AG04449 (cell line): ENCODE measurements at regions of chr7 and their contacts with region 1.

Region 1: GRCh38 chr7:120987683-120988590 is 574 bp upstream of the CPED1 start:
- DNase-seq: peak; percentile 77
- H3K4me3 ChIP-seq: peak overlapping the region; percentile 63
- CTCF ChIP-seq: peak; percentile 88

Region 2: GRCh38 chr7:120680985-120681384 is 307.0 kb before region 1 on chr7:
- CTCF ChIA-PET with region 1: no interaction called
- POLR2A ChIA-PET with region 1: no interaction called
- DNase-seq: no peak
- H3K4me3 ChIP-seq: no peak overlapping the region
- CTCF ChIP-seq: no peak

Region 3: GRCh38 chr7:121006711-121007315 is 18.9 kb after region 1 on chr7:
- CTCF ChIA-PET with region 1: interaction called, 90 read pairs
- POLR2A ChIA-PET with region 1: interaction called, 3 read pairs
- DNase-seq: no peak
- H3K4me3 ChIP-seq: no peak overlapping the region
- CTCF ChIP-seq: no peak

Region 4: GRCh38 chr7:121023683-121024511 is 36.0 kb after region 1 on chr7:
- CTCF ChIA-PET with region 1: interaction called, 10 read pairs
- POLR2A ChIA-PET with region 1: no interaction called
- DNase-seq: no peak
- H3K4me3 ChIP-seq: no peak overlapping the region
- CTCF ChIP-seq: no peak

Region 5: GRCh38 chr7:121081327-121081936 is 93.5 kb after region 1 on chr7:
- CTCF ChIA-PET with region 1: interaction called, 219 read pairs
- POLR2A ChIA-PET with region 1: interaction called, 41 read pairs
- DNase-seq: peak; percentile 31
- H3K4me3 ChIP-seq: no peak overlapping the region
- CTCF ChIP-seq: peak; percentile 49

Region 6: DNA sequence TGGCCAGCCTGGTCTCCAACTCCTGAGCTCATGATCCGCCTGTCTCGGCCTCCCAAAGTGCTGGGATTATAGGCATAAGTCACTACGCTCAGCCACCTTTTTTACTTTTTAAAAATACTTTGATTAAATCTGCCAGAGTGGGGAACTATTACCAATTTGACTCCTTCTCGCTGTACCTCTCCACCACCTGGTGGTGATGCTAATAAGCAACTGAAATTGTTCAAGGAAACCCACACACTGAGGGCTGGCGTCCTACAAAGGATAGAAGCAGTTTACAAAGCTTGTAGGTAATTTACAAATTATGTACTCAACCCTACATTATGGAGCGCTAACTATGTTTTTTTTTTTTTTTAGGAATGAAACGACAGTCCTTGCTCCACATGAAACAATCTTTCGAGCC is 111.6 kb after region 1 on chr7:
- CTCF ChIA-PET with region 1: interaction called, 132 read pairs
- POLR2A ChIA-PET with region 1: no interaction called
- DNase-seq: no peak
- H3K4me3 ChIP-seq: no peak overlapping the region
- CTCF ChIP-seq: no peak

Region 7: DNA sequence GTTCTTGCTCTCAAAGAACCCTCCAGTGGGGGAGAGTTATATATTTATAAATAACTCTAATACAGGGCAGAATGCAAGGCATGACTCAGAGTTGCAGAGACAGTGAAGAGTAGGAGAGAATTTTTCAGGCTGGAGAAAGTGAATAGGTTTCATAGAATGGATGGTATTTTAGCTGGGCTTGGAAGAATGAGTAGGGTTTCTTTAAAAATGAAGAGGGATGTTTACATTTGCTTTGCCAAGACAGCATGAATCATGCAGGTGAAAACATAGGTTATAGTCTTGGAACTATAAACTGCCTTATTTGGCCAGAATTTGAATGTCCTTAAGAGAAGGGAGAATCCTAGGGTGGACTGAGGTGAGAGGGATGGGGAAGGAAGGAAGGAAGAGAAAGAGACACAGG is 125.4 kb after region 1 on chr7:
- CTCF ChIA-PET with region 1: interaction called, 97 read pairs
- POLR2A ChIA-PET with region 1: no interaction called
- DNase-seq: peak; percentile 24
- H3K4me3 ChIP-seq: no peak overlapping the region
- CTCF ChIP-seq: no peak